ENCODE measurements at regions of chr11 and their contacts with region 1.

Region 1: DNA sequence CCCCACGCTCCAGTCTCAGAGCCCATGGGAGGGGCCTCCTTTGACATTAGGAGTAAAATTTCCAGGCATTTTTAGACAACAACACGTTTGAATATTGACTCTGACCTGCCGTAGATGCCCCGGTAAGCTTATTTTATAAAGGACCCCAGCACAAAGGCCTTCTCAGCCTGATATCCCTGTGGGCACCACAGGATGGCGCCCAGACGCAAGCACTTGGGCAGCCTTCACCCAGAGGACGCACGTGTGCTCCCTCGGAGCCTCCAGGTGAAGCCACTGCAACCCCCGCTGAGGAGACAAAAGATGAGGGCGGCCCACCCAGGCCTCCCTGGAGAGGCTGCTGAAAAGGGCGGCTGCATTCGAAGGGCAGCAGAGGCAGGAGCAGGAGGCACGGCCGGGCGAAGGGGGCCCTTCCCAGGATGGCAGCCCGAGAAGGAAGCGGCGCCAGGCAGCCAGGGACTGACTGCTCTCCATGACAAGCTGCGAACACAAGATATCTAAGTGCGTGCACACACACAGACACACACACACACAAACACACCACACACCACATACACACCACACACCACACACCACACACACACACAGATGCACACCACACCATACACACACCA is 15.2 kb upstream of the TH start:
- DNase-seq: peak in 1 of 2 experiments; percentile 69
- H3K4me3 ChIP-seq: no peak overlapping the region
- H3K27ac ChIP-seq: no peak overlapping the region
- H3K4me1 ChIP-seq: no peaks in the 10 kb centered on the region; a peak in 2 of 7 replicates
- H3K27me3 ChIP-seq: peaks cover 0 to 16% (median 5%) of the 10 kb centered on the region in 4 experiments; a peak in 2 of 7 replicates
- CTCF ChIP-seq: peak; percentile 66 to 75 (median 69)
- EP300 ChIP-seq: no peak
- POLR2A ChIP-seq: no peak
- RAD21 ChIP-seq: peak; percentile 62 to 77

Region 2: DNA sequence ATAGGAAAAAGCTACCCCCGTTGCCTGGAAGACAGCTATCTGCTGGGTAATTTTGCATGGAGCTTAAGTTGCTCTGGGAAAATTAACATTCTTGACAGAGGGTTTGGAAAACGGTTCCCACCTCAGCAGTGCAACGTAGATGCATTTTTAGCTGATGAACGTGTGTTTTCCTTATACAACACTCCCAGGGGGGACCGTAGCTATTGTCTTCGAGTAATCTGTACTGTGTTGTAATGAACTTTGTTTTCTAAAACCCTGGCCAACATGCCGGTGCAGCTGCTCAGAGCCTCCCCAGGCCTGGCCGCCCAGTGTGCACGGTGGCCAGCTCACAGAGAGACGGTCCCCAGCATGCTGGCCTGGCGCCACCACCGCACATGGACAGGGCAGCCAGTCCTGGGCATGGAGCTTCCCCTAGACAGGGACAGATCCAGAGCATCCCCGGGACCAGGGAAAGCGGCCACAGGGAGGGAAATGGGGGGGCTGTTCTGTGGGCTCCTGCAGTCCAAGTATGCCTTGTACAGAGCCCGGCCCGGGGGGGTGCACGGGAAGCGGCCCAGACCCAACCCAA is 265.1 kb before region 1 on chr11:
- CTCF ChIA-PET with region 1: no interaction called
- POLR2A ChIA-PET with region 1: no interaction called
- DNase-seq: no peak
- H3K4me3 ChIP-seq: no peak overlapping the region
- H3K27ac ChIP-seq: no peak overlapping the region
- H3K4me1 ChIP-seq: peaks cover 0 to 3% (median 3%) of the 10 kb centered on the region in 4 experiments; a peak in 4 of 7 replicates
- H3K27me3 ChIP-seq: no peaks in the 10 kb centered on the region
- CTCF ChIP-seq: no peak
- EP300 ChIP-seq: no peak
- POLR2A ChIP-seq: no peak
- RAD21 ChIP-seq: no peak

Region 3: GRCh38 chr11:2128130-2128510 is 58.7 kb before region 1 on chr11:
- CTCF ChIA-PET with region 1: no interaction called
- POLR2A ChIA-PET with region 1: no interaction called
- DNase-seq: no peak
- H3K4me3 ChIP-seq: no peak overlapping the region
- H3K27ac ChIP-seq: no peak overlapping the region
- H3K4me1 ChIP-seq: peaks cover 0 to 2% (median 0%) of the 10 kb centered on the region in 4 experiments; a peak in 1 of 7 replicates
- H3K27me3 ChIP-seq: peaks cover 0 to 7% (median 0%) of the 10 kb centered on the region in 4 experiments; a peak in 2 of 7 replicates
- CTCF ChIP-seq: no peak
- EP300 ChIP-seq: no peak
- POLR2A ChIP-seq: no peak
- RAD21 ChIP-seq: no peak

Region 4: GRCh38 chr11:2166091-2166851 is 20.5 kb before region 1 on chr11:
- CTCF ChIA-PET with region 1: interaction called, 28 read pairs
- POLR2A ChIA-PET with region 1: no interaction called
- DNase-seq: peak in 1 of 2 experiments; percentile 90
- H3K4me3 ChIP-seq: peak overlapping the region in 1 of 4 experiments; percentile 35; a peak in 1 of 8 replicates
- H3K27ac ChIP-seq: no peak overlapping the region
- H3K4me1 ChIP-seq: peaks cover 0 to 6% (median 1%) of the 10 kb centered on the region in 4 experiments; a peak in 2 of 7 replicates
- H3K27me3 ChIP-seq: peaks cover 0 to 14% (median 0%) of the 10 kb centered on the region in 4 experiments; a peak in 3 of 7 replicates
- CTCF ChIP-seq: peak in 2 of 3 experiments; percentile 76 to 77; a peak in 3 of 4 replicates
- EP300 ChIP-seq: no peak
- POLR2A ChIP-seq: no peak
- RAD21 ChIP-seq: peak; percentile 54 to 75

Region 5: GRCh38 chr11:2208691-2209369 is 22.1 kb after region 1 on chr11:
- CTCF ChIA-PET with region 1: interaction called, 10 read pairs
- POLR2A ChIA-PET with region 1: no interaction called
- DNase-seq: peak in 1 of 2 experiments; percentile 48
- H3K4me3 ChIP-seq: no peak overlapping the region
- H3K27ac ChIP-seq: no peak overlapping the region
- H3K4me1 ChIP-seq: peaks cover 5 to 11% (median 8%) of the 10 kb centered on the region in 4 experiments
- H3K27me3 ChIP-seq: peaks cover 0 to 6% (median 1%) of the 10 kb centered on the region in 4 experiments; a peak in 4 of 7 replicates
- CTCF ChIP-seq: peak; percentile 25 to 48 (median 47)
- EP300 ChIP-seq: no peak
- POLR2A ChIP-seq: no peak
- RAD21 ChIP-seq: peak; percentile 45 to 52

Region 6: DNA sequence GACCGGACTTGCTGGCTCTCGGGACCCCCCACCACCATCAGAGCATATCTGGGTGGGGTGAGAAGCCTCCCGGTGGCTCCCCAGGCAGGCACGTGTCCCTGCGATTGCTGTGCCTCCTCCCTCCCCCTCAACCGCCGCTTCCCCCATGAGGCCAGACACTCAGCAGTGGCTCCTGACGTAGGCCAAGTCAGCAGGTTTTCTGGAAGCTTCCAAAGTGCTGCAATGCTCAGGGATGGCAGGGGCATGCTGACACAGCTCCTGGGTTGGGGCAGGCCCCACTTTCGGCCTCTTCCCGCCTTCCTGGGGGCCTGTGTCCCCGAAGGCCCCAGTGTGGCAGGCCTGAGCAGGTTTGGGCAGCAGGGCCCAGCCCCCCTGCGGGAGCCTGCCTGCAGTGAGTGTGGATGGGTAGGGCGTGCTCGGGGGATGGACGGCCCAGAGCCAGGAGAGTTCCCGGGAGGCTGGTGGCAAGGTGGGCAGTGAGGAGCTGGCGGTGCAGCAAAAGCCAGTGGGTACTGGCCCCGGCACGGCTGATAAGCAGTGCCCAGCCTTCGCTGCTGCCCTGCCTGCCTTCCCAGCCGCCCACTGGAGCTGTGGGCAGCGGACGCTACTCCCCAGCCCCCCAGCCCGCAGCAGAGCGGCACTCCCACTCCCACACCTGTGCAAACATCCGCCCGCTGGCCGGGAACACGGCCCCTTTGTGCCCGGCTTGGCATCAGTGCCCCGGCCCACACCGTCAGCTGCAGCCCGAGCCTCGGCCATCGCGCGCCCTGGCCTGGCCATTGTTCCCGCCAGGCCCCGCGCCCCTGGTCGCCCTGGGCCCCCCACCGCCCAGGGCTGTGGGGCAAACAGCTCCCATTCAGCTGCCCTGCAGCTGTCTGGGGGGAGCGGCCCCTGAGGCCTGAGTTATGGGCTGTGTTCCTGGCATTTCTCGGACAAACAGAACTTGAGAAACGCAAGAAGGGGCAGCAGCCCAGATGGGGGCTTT is 388.1 kb after region 1 on chr11:
- CTCF ChIA-PET with region 1: no interaction called
- POLR2A ChIA-PET with region 1: no interaction called
- DNase-seq: no peak
- H3K4me3 ChIP-seq: no peak overlapping the region
- H3K27ac ChIP-seq: no peak overlapping the region
- H3K4me1 ChIP-seq: peaks cover 0 to 5% (median 0%) of the 10 kb centered on the region in 4 experiments; a peak in 4 of 7 replicates
- H3K27me3 ChIP-seq: peaks cover 5 to 55% (median 36%) of the 10 kb centered on the region in 4 experiments; a peak in 6 of 7 replicates
- CTCF ChIP-seq: no peak
- EP300 ChIP-seq: no peak
- POLR2A ChIP-seq: no peak
- RAD21 ChIP-seq: no peak

Measured in H1 (cell line).